Heart left ventricle (tissue), 16 donors: ENCODE measurements at regions of chr12 and their contacts with region 1.

Region 1: DNA sequence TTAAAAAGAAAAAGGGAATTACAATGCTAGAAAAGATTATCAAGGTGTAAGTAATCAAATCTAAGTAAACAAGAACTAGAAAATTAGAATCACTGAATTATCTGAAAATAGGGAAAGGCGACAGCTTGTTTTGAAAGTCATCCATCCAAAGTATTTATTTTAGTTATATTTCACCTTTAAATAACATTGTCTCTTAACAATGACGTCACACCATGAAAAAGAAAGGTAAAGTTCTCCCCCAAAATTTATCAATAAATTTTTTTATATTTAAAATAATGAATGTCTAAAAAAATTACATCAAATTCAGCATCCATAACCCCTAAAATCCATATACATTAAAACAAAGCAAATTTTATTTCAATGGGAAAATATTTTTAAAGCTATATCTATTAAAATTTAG is 223.2 kb downstream of the RERGL start:
- DNase-seq: no peak
- ATAC-seq: no peak
- H3K4me3 ChIP-seq: no peak overlapping the region
- H3K27ac ChIP-seq: no peak overlapping the region
- H3K4me1 ChIP-seq: no peaks in the 10 kb centered on the region
- H3K27me3 ChIP-seq: no peaks in the 10 kb centered on the region
- CTCF ChIP-seq: no peak
- POLR2A ChIP-seq: no peak

Region 2: DNA sequence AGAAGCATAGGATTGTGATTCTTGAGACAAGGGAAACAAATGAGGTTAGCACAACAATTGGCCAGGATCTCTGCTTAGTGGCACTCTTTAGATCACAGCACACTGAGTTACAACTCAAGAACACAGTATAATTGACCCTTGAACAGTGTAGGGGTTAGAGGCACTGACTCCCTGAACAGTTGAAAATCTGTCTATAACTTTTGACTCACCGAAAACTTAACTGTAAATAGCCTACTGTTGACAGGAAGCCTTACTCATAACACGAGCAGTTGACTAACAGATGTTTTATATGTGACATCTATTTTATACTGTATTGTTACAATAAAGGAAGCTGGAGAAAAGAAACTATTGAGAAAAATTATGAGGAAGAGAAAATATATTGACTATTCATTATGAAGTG is 72.9 kb before region 1 on chr12:
- intact Hi-C with region 1: loop called in 1 of 10 experiments (anchors 5 kb)
- DNase-seq: no peak
- ATAC-seq: no peak
- H3K4me3 ChIP-seq: no peak overlapping the region
- H3K27ac ChIP-seq: no peak overlapping the region
- H3K4me1 ChIP-seq: no peaks in the 10 kb centered on the region
- H3K27me3 ChIP-seq: no peaks in the 10 kb centered on the region
- CTCF ChIP-seq: no peak
- POLR2A ChIP-seq: no peak

Region 3: GRCh38 chr12:17971850-17972249 is 105.0 kb after region 1 on chr12:
- intact Hi-C with region 1: no loop called
- DNase-seq: no peak
- ATAC-seq: no peak
- H3K4me3 ChIP-seq: no peak overlapping the region
- H3K27ac ChIP-seq: no peak overlapping the region
- H3K4me1 ChIP-seq: no peaks in the 10 kb centered on the region
- H3K27me3 ChIP-seq: no peaks in the 10 kb centered on the region
- CTCF ChIP-seq: no peak
- POLR2A ChIP-seq: no peak